Calu3 (cell line): ENCODE measurements at regions of chr6 and their contacts with region 1.

Region 1: GRCh38 chr6:99520855-99521632 is 5.8 kb upstream of the USP45 start:
- DNase-seq: peak; percentile 88
- H3K4me3 Mint-ChIP-seq: peak overlapping the region; percentile 100
- H3K27ac Mint-ChIP-seq: peak overlapping the region; percentile 98
- H3K4me1 Mint-ChIP-seq: peaks cover 10% of the 10 kb centered on the region
- H3K27me3 Mint-ChIP-seq: no peaks in the 10 kb centered on the region
- CTCF ChIP-seq: peak; percentile 82

Region 2: GRCh38 chr6:99434702-99435530 is 86.1 kb before region 1 on chr6:
- CTCF ChIA-PET with region 1: no interaction called
- intact Hi-C with region 1: loop called (anchors 5 kb)
- DNase-seq: no peak
- H3K4me3 Mint-ChIP-seq: no peak overlapping the region
- H3K27ac Mint-ChIP-seq: no peak overlapping the region
- H3K4me1 Mint-ChIP-seq: no peaks in the 10 kb centered on the region
- H3K27me3 Mint-ChIP-seq: no peaks in the 10 kb centered on the region
- CTCF ChIP-seq: peak; percentile 46

Region 3: GRCh38 chr6:99563056-99563723 is 42.1 kb after region 1 on chr6:
- CTCF ChIA-PET with region 1: no interaction called
- intact Hi-C with region 1: loop called (anchors 5 kb)
- DNase-seq: no peak
- H3K4me3 Mint-ChIP-seq: peak overlapping the region; percentile 40
- H3K27ac Mint-ChIP-seq: peak overlapping the region; percentile 73
- H3K4me1 Mint-ChIP-seq: peaks cover 30% of the 10 kb centered on the region
- H3K27me3 Mint-ChIP-seq: no peaks in the 10 kb centered on the region
- CTCF ChIP-seq: no peak